Ovary (tissue), 10 donors: ENCODE measurements at regions of chr4 and their contacts with region 1.

Region 1: DNA sequence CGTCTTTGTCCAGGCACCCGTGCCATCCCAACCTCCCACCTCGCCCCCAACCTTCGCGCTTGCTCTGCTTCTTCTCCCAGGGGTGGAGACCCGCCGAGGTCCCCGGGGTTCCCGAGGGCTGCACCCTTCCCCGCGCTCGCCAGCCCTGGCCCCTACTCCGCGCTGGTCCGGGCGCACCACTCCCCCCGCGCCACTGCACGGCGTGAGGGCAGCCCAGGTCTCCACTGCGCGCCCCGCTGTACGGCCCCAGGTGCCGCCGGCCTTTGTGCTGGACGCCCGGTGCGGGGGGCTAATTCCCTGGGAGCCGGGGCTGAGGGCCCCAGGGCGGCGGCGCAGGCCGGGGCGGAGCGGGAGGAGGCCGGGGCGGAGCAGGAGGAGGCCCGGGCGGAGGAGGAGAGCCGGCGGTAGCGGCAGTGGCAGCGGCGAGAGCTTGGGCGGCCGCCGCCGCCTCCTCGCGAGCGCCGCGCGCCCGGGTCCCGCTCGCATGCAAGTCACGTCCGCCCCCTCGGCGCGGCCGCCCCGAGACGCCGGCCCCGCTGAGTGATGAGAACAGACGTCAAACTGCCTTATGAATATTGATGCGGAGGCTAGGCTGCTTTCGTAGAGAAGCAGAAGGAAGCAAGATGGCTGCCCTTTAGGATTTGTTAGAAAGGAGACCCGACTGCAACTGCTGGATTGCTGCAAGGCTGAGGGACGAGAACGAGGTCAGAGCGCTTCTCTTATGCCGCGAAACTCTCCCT is at the start of gene TET2:
- DNase-seq: peak; percentile 43 to 73 (median 60)
- H3K4me3 ChIP-seq: peak within 1 kb of the TSS; percentile 53
- H3K27ac ChIP-seq: peak within 1 kb of the TSS; percentile 77 to 83
- H3K4me1 ChIP-seq: peaks cover 8% of the 10 kb centered on the region
- H3K27me3 ChIP-seq: no peaks in the 10 kb centered on the region
- CTCF ChIP-seq: peak in 1 of 3 donors; percentile 9
- EP300 ChIP-seq: no peak
- POLR2A ChIP-seq: no peak
- total RNA-seq, gene TET2: 11.4 to 20.8 (median 17.9) TPM

Region 2: DNA sequence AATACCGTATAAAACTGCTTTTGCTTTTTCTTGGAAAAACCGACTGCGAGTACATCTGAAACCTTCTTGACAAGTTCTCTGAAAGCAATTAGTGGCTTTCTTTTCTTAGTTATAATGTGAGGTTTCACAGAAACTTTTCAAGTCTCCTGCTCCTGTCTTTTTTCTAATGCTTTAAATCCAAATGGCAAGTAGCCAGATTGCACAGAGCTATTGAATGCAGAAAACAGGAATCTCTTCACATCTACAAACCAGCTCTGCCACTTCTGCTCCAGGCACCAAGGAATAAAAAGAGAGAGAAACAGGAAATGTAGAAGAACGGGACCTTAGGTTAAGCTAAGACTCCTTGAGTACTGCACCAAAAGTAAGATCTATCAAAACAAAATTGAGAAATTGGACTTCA is 267.1 kb before region 1 on chr4:
- intact Hi-C with region 1: no loop called
- DNase-seq: no peak
- H3K4me3 ChIP-seq: no peak overlapping the region
- H3K27ac ChIP-seq: no peak overlapping the region
- H3K4me1 ChIP-seq: no peaks in the 10 kb centered on the region
- H3K27me3 ChIP-seq: no peaks in the 10 kb centered on the region
- CTCF ChIP-seq: no peak
- EP300 ChIP-seq: no peak
- POLR2A ChIP-seq: no peak

Region 3: DNA sequence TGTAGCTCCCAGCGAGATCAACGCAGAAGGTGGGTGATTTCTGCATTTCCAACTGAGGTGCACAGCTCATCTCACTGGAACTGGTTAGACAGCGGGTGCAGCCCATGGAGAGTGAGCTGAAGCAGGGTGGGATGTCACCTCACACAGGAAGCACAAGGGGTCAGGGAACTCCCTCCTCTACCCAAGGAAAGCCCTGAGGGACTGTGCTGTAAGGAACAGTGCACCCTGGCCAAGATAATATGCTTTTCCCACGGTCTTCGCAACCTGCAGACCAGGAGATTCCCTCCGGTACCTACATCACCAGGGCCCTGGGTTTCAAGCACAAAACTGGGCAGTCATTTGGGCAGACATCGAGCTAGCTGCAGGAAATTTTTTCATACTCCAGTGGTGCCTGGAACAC is 216.1 kb before region 1 on chr4:
- intact Hi-C with region 1: no loop called
- DNase-seq: no peak
- H3K4me3 ChIP-seq: no peak overlapping the region
- H3K27ac ChIP-seq: no peak overlapping the region
- H3K4me1 ChIP-seq: no peaks in the 10 kb centered on the region
- H3K27me3 ChIP-seq: no peaks in the 10 kb centered on the region
- CTCF ChIP-seq: no peak
- EP300 ChIP-seq: no peak
- POLR2A ChIP-seq: no peak

Region 4: DNA sequence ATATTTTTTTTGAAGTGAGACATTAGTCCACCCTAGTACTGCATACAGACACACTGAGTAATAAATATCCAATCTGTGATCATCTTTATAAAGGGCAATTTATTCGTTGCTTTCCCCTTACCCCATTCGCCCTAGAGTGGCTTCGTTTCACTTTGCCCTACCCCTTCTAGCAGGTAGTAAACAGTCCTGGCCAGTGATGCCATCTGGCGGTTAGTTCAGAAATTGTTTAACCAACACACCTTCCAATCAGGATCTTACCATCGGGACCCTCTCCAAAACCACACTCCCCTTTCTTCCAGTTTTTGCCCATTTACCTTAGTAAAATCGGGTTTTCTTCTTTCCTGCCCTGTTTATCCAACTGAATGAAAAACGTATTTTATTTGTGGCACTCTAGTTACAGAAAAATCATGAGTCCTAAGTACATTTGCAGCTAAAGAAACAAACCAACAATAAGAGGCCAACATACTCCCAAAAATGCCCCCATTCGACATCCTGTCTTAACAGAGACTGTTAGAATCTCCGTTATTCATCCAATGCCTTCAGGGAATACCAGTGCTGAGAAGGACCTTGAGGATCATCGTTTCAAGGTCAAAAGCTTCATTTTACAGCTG is 325.2 kb after region 1 on chr4:
- intact Hi-C with region 1: loop called in 2 of 4 experiments (anchors 5 kb)
- DNase-seq: peak in 4 of 5 donors; percentile 27 to 69 (median 40)
- H3K4me3 ChIP-seq: peak overlapping the region; percentile 71
- H3K27ac ChIP-seq: no peak overlapping the region
- H3K4me1 ChIP-seq: peaks cover 3% of the 10 kb centered on the region
- H3K27me3 ChIP-seq: no peaks in the 10 kb centered on the region
- CTCF ChIP-seq: peak in 2 of 3 donors; percentile 34 to 35
- EP300 ChIP-seq: no peak
- POLR2A ChIP-seq: no peak